ENCODE measurements at regions of chr7 and their contacts with region 1.

Region 1: DNA sequence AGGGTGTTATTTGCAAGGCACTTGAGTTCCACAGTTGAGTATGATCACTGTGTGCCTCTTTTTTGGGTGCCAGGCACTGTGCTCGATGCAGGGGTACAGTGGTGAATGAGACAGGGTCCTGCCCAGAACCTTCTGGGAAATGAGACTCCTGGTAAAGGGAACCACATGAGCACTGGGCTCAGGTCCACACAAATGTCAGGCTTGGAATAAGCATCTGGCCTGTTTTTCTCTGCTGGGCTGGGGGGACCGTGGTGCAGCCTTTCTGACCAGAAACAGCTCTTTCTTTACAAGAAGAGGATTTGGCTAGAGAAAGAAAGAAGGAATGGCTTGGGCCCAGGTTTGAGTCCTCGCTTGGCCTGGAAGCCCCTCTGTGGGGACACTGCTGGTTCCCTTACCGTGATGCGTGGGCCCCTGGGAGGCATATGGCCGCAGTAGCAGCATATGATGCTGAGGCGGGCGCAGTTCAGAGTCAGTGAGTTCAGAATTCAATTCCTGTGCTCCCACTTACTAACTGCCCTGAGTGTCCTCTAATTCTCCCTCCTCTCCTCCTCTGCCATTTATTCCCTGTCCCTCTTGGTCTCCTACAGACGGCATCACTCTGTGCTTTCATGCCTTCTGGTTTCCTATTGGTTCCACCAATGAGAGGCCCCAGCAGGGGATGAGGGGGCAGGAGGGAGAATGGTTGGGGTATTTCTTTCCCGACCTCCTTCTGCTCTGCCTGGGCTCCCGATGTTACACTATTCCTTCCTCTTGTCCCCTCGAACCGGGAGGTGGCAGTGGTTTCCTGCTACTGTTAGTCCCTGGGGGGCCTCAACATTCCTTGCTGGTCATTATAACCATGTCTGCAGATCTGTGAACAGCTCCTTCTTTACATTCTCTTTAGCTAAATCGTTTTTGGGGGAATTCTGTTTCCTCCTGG is 9.6 kb upstream of the KCP start:
- DNase-seq: peak in 1 of 2 experiments; percentile 36
- H3K4me3 ChIP-seq: no peak overlapping the region
- H3K4me3 Mint-ChIP-seq: no peak overlapping the region
- H3K27ac Mint-ChIP-seq: no peak overlapping the region
- H3K4me1 ChIP-seq: no peaks in the 10 kb centered on the region
- H3K4me1 Mint-ChIP-seq: peaks cover 7% of the 10 kb centered on the region
- H3K27me3 ChIP-seq: no peaks in the 10 kb centered on the region; the same call in 1 of the 2 replicates
- H3K27me3 Mint-ChIP-seq: peaks cover 18% of the 10 kb centered on the region
- CTCF ChIP-seq: peak in 1 of 2 experiments; percentile 37

Region 2: GRCh38 chr7:128997181-128997580 is 77.0 kb after region 1 on chr7:
- CTCF ChIA-PET with region 1: no interaction called
- POLR2A ChIA-PET with region 1: interaction called, 13 read pairs
- intact Hi-C with region 1: no loop called
- DNase-seq: no peak
- H3K4me3 ChIP-seq: no peak overlapping the region
- H3K4me3 Mint-ChIP-seq: no peak overlapping the region
- H3K27ac Mint-ChIP-seq: no peak overlapping the region
- H3K4me1 ChIP-seq: no peaks in the 10 kb centered on the region
- H3K4me1 Mint-ChIP-seq: no peaks in the 10 kb centered on the region
- H3K27me3 ChIP-seq: no peaks in the 10 kb centered on the region
- H3K27me3 Mint-ChIP-seq: no peaks in the 10 kb centered on the region
- CTCF ChIP-seq: no peak